ENCODE measurements at regions of chr5 and their contacts with region 1.

Region 1: GRCh38 chr5:179986328-179986727 is 78.6 kb upstream of the TBC1D9B start:
- DNase-seq: peak; percentile 26 to 33
- H3K4me3 ChIP-seq: no peak overlapping the region
- H3K27ac ChIP-seq: no peak overlapping the region
- H3K4me1 ChIP-seq: no peaks in the 10 kb centered on the region
- H3K27me3 ChIP-seq: no peaks in the 10 kb centered on the region
- CTCF ChIP-seq: peak in 4 of 6 experiments; percentile 23 to 59 (median 46)
- POLR2A ChIP-seq: no peak

Region 2: GRCh38 chr5:180090098-180090768 is 103.9 kb after region 1 on chr5:
- intact Hi-C with region 1: loop called (anchors 10 kb)
- DNase-seq: peak; percentile 70 to 75
- H3K4me3 ChIP-seq: peak overlapping the region; percentile 24 to 50 (median 24)
- H3K27ac ChIP-seq: peak overlapping the region; percentile 53 to 70 (median 59)
- H3K4me1 ChIP-seq: peaks cover 6 to 9% of the 10 kb centered on the region in 2 donors
- H3K27me3 ChIP-seq: no peaks in the 10 kb centered on the region
- CTCF ChIP-seq: peak; percentile 70 to 92 (median 76)
- POLR2A ChIP-seq: no peak